Panc1 (cell line): ENCODE measurements at regions of chr4 and their contacts with region 1.

Region 1: DNA sequence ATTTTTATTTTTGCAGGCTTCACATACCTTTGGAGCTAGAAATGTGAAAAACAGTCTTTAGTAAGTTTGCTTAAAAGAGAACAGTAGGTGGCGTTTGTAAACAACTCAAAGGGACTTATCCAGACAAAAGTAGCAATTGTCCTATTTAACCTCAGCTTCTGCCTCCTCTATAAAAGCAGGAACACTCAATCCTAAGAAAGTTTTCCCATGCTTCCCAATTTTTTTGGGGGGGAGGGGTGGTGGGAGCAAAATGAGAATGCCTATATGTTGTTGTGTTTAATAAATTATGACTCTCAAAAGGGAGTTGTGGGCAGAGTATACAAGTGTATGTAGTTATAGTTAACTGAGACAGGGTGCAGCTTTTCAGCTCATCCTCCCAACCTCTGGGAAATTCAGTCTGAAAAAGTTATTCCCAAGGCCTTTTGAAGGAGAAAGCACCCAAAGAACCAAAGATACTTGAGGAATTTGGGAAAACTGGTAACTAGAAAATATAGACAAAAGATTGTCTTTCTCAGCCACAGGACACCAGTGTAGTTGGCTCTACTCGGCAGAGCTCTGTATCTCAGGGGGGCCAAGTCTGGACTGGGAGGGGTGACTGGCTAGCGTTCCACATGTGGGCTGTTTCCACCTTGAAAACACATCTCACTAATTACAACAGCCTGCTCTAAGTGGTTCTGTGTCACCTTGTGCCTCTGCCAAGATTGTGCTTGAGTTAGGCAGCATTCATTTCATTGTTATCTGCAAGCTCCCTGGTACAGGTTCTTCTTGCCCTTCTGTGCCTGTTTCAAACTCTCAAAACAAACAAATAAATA is 2.8 kb downstream of the SFRP2 start:
- DNase-seq: peak; percentile 10
- ATAC-seq: 0 out of 2 replicates have a peak, but pooled peaks have one; percentile 68
- H3K4me3 ChIP-seq: no peak overlapping the region
- H3K27ac ChIP-seq: no peak overlapping the region
- H3K4me1 ChIP-seq: no peaks in the 10 kb centered on the region
- H3K27me3 ChIP-seq: peaks cover 8% of the 10 kb centered on the region
- CTCF ChIP-seq: peak; percentile 45; the same call in 1 of the 2 replicates

Region 2: DNA sequence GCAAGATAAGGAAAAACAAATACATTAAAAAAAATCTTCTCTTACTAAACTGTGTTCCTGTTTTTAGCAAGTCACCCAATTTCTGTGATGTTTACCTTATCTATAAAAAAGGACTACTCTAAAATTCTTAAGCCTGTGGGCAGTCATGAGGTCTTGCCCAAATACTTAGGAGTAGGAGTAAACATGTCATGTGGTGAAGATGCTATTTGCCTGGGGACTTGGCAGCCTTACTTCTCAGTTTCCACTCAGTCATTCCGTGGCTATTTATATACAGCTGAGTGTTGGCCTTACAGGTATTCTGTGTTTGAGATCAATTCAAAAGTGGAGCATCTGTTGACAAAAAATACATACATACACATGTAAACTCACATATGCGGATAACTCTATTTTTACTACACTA is 191.9 kb before region 1 on chr4:
- CTCF ChIA-PET with region 1: no interaction called
- POLR2A ChIA-PET with region 1: no interaction called
- in situ Hi-C with region 1: no loop called
- intact Hi-C with region 1: no loop called
- DNase-seq: no peak
- ATAC-seq: no peak
- H3K4me3 ChIP-seq: no peak overlapping the region
- H3K27ac ChIP-seq: no peak overlapping the region
- H3K4me1 ChIP-seq: no peaks in the 10 kb centered on the region
- H3K27me3 ChIP-seq: no peaks in the 10 kb centered on the region
- CTCF ChIP-seq: no peak

Region 3: GRCh38 chr4:153988492-153989363 is 202.6 kb after region 1 on chr4:
- CTCF ChIA-PET with region 1: interaction called, 12 read pairs
- POLR2A ChIA-PET with region 1: no interaction called
- in situ Hi-C with region 1: no loop called
- intact Hi-C with region 1: no loop called
- DNase-seq: no peak
- ATAC-seq: no peak
- H3K4me3 ChIP-seq: no peak overlapping the region
- H3K27ac ChIP-seq: no peak overlapping the region
- H3K4me1 ChIP-seq: no peaks in the 10 kb centered on the region
- H3K27me3 ChIP-seq: no peaks in the 10 kb centered on the region
- CTCF ChIP-seq: no peak

Region 4: GRCh38 chr4:154314248-154314647 is 528.1 kb after region 1 on chr4:
- CTCF ChIA-PET with region 1: interaction called, 15 read pairs
- POLR2A ChIA-PET with region 1: no interaction called
- in situ Hi-C with region 1: no loop called
- intact Hi-C with region 1: no loop called
- DNase-seq: peak; percentile 17
- ATAC-seq: no peak
- H3K4me3 ChIP-seq: no peak overlapping the region
- H3K27ac ChIP-seq: no peak overlapping the region
- H3K4me1 ChIP-seq: no peaks in the 10 kb centered on the region
- H3K27me3 ChIP-seq: no peaks in the 10 kb centered on the region
- CTCF ChIP-seq: no peak